Dorsolateral prefrontal cortex (tissue), 120 donors: ENCODE measurements at regions of chr2 and their contacts with region 1.

Region 1: DNA sequence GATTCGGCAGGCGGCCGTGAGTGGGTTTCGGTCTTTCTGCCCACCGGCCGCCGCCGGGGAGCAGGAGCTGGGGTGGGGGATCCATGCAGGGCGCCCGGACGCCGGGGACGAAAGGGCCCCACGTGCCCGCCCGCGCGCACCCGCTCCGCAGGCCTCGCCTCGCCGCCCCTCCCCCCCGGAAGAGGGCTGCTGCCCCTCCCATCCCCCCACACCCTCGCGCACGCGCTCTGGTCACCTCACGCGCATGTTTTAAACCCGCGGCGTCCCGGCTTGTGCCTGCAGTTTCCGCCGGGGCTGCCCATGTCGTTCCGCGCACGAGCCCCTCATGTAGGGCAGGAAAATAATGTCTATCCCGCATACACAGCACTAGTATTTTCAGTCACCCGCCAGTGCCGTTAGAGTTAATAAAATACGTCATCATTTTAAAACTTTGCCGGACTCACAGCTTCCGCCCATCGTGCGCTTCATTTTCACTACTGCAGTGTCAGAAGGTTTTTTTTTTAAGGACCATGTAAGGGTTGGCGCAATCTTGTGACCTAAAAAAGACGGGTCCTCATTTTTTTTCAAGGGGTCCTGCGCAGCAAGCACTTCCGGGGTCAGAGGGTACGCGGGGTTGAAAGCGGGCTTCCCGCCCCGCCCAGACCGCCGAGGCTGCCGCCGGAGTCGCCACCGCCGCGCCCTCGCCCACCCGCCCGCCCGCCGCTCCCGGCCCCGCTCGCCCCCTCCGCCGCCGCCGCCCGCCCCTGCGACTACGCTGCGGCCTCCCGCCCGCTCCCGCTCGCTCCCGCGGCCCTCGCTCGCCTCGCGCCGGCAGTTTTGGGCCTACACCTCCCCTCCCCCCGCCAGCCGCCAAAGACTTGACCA is at the start of gene PCBP1:
- DNase-seq: peak; percentile 81 to 92 (median 88)
- H3K4me3 ChIP-seq: peak within 1 kb of the TSS; percentile 61 to 99 (median 92)
- H3K27ac ChIP-seq: peak within 1 kb of the TSS; percentile 100
- H3K27me3 ChIP-seq: no peaks in the 10 kb centered on the region
- CTCF ChIP-seq: peak in 2 of 56 donors; percentile 6 to 8
- total RNA-seq, gene PCBP1: 118 to 237 (median 174) TPM

Region 2: DNA sequence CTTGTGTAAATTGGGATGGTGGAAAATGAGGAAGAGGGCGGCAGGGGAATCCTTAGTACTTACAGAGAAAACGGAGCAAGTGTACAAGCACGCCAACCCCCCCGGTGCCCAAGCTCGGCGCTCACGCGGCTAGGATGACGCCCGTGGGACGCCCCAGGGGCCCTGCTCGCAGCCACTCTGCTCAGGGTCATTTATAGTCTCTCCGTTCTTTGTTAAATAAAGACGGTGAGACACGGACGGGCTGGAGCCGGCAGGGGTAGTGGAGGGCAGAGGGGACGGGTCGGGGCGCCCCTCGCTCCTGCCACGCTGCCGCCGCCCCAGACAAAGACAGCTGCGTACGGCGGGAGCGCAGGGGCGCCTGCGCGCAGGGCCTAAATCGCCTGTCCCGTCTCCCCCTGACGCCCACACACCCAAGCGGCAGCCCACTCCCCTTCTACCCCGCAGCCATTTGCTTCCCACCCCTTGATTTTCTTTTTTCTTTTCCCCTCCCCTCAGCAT is 38.0 kb after region 1 on chr2:
- intact Hi-C with region 1: loop called (anchors 2 to 5 kb)
- DNase-seq: peak in 9 of 10 donors; percentile 56 to 74 (median 64)
- H3K4me3 ChIP-seq: peak overlapping the region; percentile 54 to 87 (median 74)
- H3K27ac ChIP-seq: peak overlapping the region; percentile 96 to 100 (median 100)
- H3K27me3 ChIP-seq: no peaks in the 10 kb centered on the region
- CTCF ChIP-seq: peak in 4 of 56 donors; percentile 9 to 19 (median 14)